Activated CD4-positive, alpha-beta memory T cell treated with anti-CD3 and anti-CD28 coated beads for 36 hours (primary cell): ENCODE measurements at regions of chr4 and their contacts with region 1.

Region 1: GRCh38 chr4:88211473-88212252 is 53.2 kb upstream of the ABCG2 start:
- DNase-seq: peak; percentile 28
- H3K4me3 Mint-ChIP-seq: no peak overlapping the region
- H3K27ac Mint-ChIP-seq: no peak overlapping the region
- H3K4me1 Mint-ChIP-seq: no peaks in the 10 kb centered on the region
- H3K27me3 Mint-ChIP-seq: peaks cover 1% of the 10 kb centered on the region

Region 2: GRCh38 chr4:87679449-87680169 is 532.1 kb before region 1 on chr4:
- CTCF ChIA-PET with region 1: interaction called, 16 read pairs
- POLR2A ChIA-PET with region 1: no interaction called
- intact Hi-C with region 1: loop called (anchors 1 kb)
- DNase-seq: peak; percentile 36
- H3K4me3 Mint-ChIP-seq: no peak overlapping the region
- H3K27ac Mint-ChIP-seq: no peak overlapping the region
- H3K4me1 Mint-ChIP-seq: no peaks in the 10 kb centered on the region
- H3K27me3 Mint-ChIP-seq: no peaks in the 10 kb centered on the region

Region 3: DNA sequence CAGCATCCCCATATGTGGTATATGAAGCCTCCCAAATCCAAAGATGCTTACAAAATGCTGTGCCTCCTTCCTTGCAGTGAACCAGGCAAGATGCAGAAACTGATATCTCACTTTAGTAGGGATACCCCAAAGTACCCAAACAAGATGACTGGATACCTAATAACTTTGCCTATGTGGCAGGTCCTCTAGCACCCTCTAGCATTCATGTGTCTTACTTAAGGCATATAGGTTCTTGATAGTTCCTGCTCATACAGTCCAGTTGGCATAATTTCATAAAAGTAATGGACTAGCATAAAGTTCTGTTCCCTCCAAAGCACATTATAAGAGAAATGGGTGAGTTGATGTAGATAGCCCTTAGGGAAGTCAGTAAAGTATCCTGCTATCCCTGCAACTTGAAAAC is 272.9 kb before region 1 on chr4:
- CTCF ChIA-PET with region 1: no interaction called
- POLR2A ChIA-PET with region 1: no interaction called
- intact Hi-C with region 1: no loop called
- DNase-seq: no peak
- H3K4me3 Mint-ChIP-seq: no peak overlapping the region
- H3K27ac Mint-ChIP-seq: no peak overlapping the region
- H3K4me1 Mint-ChIP-seq: no peaks in the 10 kb centered on the region
- H3K27me3 Mint-ChIP-seq: peaks cover 12% of the 10 kb centered on the region

Region 4: DNA sequence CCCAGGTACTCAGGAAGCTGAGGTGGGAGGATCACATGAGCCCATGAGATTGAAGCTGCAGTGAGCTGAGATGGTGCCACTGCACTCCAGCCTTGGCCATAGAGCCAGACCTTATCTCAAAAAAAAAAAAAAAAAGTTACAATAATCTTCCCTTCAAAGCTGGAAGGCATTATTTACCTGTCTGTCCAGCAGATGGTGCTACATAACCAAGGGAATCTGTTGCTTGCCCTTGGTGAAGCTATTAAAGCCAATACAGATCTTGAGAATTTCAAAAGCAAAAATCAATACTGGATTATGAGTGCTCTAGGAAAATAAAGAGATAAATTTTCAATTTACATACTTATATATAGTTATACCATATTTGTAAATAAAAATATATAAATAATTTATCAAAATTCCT is 178.4 kb before region 1 on chr4:
- CTCF ChIA-PET with region 1: interaction called, 121 read pairs
- POLR2A ChIA-PET with region 1: interaction called, 3 read pairs
- intact Hi-C with region 1: loop called (anchors 1 kb)
- DNase-seq: peak; percentile 26
- H3K4me3 Mint-ChIP-seq: no peak overlapping the region
- H3K27ac Mint-ChIP-seq: no peak overlapping the region
- H3K4me1 Mint-ChIP-seq: peaks cover 4% of the 10 kb centered on the region
- H3K27me3 Mint-ChIP-seq: no peaks in the 10 kb centered on the region

Region 5: DNA sequence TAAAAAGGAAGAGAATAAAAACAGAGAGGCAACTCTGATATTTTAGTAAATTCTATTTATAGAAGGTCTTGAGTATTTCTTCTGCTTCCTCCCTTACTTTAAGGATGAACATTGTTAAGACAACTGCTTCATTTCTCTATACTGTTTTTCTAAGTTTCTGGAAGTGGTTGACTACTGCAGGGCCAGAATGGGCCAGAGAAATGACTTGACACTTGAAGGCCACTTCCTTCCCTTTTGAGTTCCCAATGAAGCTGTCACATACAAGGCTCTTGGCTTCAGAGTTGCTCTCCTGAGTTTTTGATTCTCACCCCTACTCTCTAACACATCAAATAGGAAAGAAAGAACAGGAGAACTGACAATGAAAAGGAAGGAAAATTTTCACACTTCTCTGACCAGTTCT is 166.6 kb before region 1 on chr4:
- CTCF ChIA-PET with region 1: no interaction called
- POLR2A ChIA-PET with region 1: no interaction called
- intact Hi-C with region 1: no loop called
- DNase-seq: no peak
- H3K4me3 Mint-ChIP-seq: no peak overlapping the region
- H3K27ac Mint-ChIP-seq: no peak overlapping the region
- H3K4me1 Mint-ChIP-seq: no peaks in the 10 kb centered on the region
- H3K27me3 Mint-ChIP-seq: no peaks in the 10 kb centered on the region

Region 6: GRCh38 chr4:88196013-88196365 is 15.7 kb before region 1 on chr4:
- CTCF ChIA-PET with region 1: interaction called, 15 read pairs
- POLR2A ChIA-PET with region 1: no interaction called
- intact Hi-C with region 1: no loop called
- DNase-seq: no peak
- H3K4me3 Mint-ChIP-seq: no peak overlapping the region
- H3K27ac Mint-ChIP-seq: no peak overlapping the region
- H3K4me1 Mint-ChIP-seq: peaks cover 16% of the 10 kb centered on the region
- H3K27me3 Mint-ChIP-seq: no peaks in the 10 kb centered on the region

Region 7: DNA sequence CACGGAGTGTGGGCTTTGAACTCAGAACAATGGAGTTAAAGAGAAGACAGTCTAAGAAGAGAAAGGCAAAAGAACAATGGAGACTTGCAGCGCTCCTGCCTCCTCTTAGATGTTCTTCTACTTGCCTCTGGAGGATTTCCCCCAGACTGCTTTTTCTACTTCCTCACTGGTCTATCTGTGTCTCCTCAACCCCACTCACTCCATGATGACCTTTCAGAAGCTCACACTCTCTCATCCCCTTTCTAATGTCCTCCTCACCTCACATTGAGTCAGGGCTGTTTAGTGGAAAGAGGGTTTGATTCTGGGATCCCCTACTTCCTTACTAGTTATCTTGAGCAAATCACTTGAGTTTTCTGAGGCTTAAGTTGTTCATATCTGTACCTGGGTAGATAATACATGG is 154.8 kb after region 1 on chr4:
- CTCF ChIA-PET with region 1: interaction called, 6 read pairs
- POLR2A ChIA-PET with region 1: no interaction called
- intact Hi-C with region 1: loop called (anchors 5 kb)
- DNase-seq: no peak
- H3K4me3 Mint-ChIP-seq: no peak overlapping the region
- H3K27ac Mint-ChIP-seq: no peak overlapping the region
- H3K4me1 Mint-ChIP-seq: no peaks in the 10 kb centered on the region
- H3K27me3 Mint-ChIP-seq: no peaks in the 10 kb centered on the region

Region 8: GRCh38 chr4:89024051-89024675 is 812.5 kb after region 1 on chr4:
- CTCF ChIA-PET with region 1: interaction called, 3 read pairs
- POLR2A ChIA-PET with region 1: no interaction called
- intact Hi-C with region 1: loop called (anchors 10 kb)
- DNase-seq: peak; percentile 33
- H3K4me3 Mint-ChIP-seq: no peak overlapping the region
- H3K27ac Mint-ChIP-seq: no peak overlapping the region
- H3K4me1 Mint-ChIP-seq: peaks cover 5% of the 10 kb centered on the region
- H3K27me3 Mint-ChIP-seq: no peaks in the 10 kb centered on the region